ENCODE measurements at regions of chr12 and their contacts with region 1.

Region 1: GRCh38 chr12:112382232-112382796 is at the start of gene HECTD4:
- DNase-seq: peak; percentile 98
- ATAC-seq: peak; percentile 97
- H3K4me3 Mint-ChIP-seq: peak within 1 kb of the TSS; percentile 84
- H3K27ac Mint-ChIP-seq: peak within 1 kb of the TSS; percentile 87
- H3K4me1 Mint-ChIP-seq: peaks cover 26% of the 10 kb centered on the region
- H3K27me3 Mint-ChIP-seq: no peaks in the 10 kb centered on the region
- CTCF ChIP-seq: no peak
- total RNA-seq, gene HECTD4: 18.2 to 22.6 TPM

Region 2: GRCh38 chr12:111942557-111942956 is 439.8 kb before region 1 on chr12:
- CTCF ChIA-PET with region 1: interaction called, 7 read pairs
- POLR2A ChIA-PET with region 1: no interaction called
- intact Hi-C with region 1: loop called (anchors 10 kb)
- DNase-seq: peak; percentile 11
- ATAC-seq: no peak
- H3K4me3 Mint-ChIP-seq: no peak overlapping the region
- H3K27ac Mint-ChIP-seq: peak overlapping the region; percentile 21
- H3K4me1 Mint-ChIP-seq: peaks cover 15% of the 10 kb centered on the region
- H3K27me3 Mint-ChIP-seq: no peaks in the 10 kb centered on the region
- CTCF ChIP-seq: no peak

Region 3: DNA sequence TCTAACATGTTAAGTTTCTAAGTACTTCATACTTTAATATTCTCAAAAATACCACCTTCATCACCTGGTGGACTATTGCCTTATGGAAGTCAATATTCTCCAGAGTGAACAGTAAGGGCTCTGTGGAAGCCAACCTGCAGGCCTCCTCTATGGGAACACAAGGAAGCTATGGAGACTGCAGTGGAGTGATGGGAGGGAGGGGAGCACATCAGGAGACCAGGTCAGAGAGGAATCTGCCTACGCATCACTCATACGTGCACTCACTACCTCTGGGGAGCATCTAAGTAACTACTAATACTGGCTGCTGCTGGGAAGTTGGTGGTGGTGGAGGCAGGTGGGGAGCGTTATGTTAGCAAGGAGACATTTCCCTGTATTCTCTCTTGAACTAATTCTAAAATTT is 20.0 kb before region 1 on chr12:
- CTCF ChIA-PET with region 1: no interaction called
- POLR2A ChIA-PET with region 1: no interaction called
- intact Hi-C with region 1: no loop called
- DNase-seq: no peak
- ATAC-seq: no peak
- H3K4me3 Mint-ChIP-seq: no peak overlapping the region
- H3K27ac Mint-ChIP-seq: no peak overlapping the region
- H3K4me1 Mint-ChIP-seq: peaks cover 2% of the 10 kb centered on the region
- H3K27me3 Mint-ChIP-seq: no peaks in the 10 kb centered on the region
- CTCF ChIP-seq: no peak